ENCODE measurements at regions of chr3 and their contacts with region 1.

Region 1: DNA sequence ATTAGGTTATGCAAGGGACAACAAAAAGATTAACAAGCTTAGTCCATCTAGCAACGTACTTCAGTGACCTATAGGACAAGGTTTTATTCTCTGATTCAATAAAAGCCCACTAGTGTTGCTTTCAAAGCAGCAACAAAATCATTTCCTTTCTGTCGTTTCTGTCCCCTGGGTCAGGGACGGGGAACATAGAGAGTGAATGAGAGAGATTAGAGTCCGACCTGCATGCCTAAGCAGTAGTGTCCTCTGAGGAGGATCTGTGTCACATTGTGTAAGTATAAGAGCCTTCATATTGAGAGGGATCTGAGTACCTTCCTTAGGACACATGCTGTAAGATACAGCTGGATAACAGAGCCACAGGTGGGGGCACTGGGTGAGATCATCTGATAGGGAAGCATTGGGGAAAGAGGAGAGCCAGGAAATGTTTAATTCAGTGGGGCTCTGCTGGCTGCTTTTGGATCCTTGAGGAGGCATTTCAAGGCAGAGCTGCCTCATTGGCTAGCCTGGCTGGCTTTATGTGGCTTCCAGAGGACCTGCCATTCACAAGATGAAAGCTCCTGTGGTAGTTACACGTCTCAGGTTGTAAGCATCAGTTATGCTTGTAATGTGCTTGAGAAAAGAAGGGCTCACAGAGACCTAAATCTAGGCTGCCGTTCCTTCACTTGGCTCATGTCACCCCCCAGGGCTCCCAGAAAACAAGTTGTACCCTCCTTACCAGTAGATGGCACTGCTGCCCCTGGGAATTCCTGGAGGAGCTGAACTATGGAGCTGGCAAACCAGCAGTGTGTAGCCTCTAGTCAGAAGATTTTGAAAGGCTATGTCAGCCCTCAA is 2.7 kb downstream of the TMEM108 start:
- DNase-seq: peak in 2 of 3 donors; percentile 49 to 71
- ATAC-seq: peak; percentile 72
- H3K4me3 ChIP-seq: no peak overlapping the region
- H3K4me1 ChIP-seq: peaks cover 4% of the 10 kb centered on the region
- CTCF ChIP-seq: peak; percentile 25

Region 2: GRCh38 chr3:133377396-133377795 is 336.5 kb after region 1 on chr3:
- intact Hi-C with region 1: loop called in 1 of 2 experiments (anchors 5 kb)
- DNase-seq: no peak
- ATAC-seq: no peak
- H3K4me3 ChIP-seq: no peak overlapping the region
- H3K4me1 ChIP-seq: no peaks in the 10 kb centered on the region
- CTCF ChIP-seq: no peak

Region 3: GRCh38 chr3:133426721-133427120 is 385.8 kb after region 1 on chr3:
- intact Hi-C with region 1: loop called (anchors 2 to 10 kb)
- DNase-seq: no peak
- ATAC-seq: no peak
- H3K4me3 ChIP-seq: no peak overlapping the region
- H3K4me1 ChIP-seq: peaks cover 4% of the 10 kb centered on the region
- CTCF ChIP-seq: no peak